Mammary epithelial cell (primary cell): ENCODE measurements at regions of chr5 and their contacts with region 1.

Region 1: GRCh38 chr5:72633649-72634048 is 126.4 kb upstream of the ZNF366 start:
- DNase-seq: no peak
- H3K4me3 ChIP-seq: no peak overlapping the region
- H3K27ac ChIP-seq: no peak overlapping the region
- H3K4me1 ChIP-seq: no peaks in the 10 kb centered on the region
- H3K27me3 ChIP-seq: no peaks in the 10 kb centered on the region
- CTCF ChIP-seq: no peak

Region 2: DNA sequence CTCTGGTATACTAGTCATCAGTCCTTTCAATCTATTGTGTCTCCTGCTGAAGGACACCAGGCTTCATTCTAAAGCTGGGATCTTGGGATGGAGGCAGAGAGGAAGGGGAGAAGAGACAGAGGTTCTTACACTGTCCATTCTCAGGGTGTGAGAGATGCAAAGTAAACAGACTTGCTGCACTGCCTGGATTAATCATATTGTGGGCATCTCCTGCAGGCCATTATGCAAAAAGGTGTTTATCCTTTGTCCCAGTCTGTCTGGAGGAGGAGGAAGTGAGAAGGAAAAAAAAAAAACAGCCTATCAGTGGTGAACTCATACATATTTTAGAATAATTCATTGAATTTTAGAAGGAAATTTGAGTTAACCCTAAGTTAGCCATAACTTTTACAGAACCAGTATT is 89.9 kb after region 1 on chr5:
- CTCF ChIA-PET with region 1: no interaction called
- dilution Hi-C with region 1: loop called (anchors 5 kb)
- in situ Hi-C with region 1: no loop called
- intact Hi-C with region 1: no loop called
- DNase-seq: peak; percentile 26
- H3K4me3 ChIP-seq: no peak overlapping the region
- H3K27ac ChIP-seq: no peak overlapping the region
- H3K4me1 ChIP-seq: no peaks in the 10 kb centered on the region
- H3K27me3 ChIP-seq: no peaks in the 10 kb centered on the region
- CTCF ChIP-seq: no peak